Activated B cell treated with CpG ODN at 0.5 μM for 24 hours (primary cell): ENCODE measurements at regions of chrX and their contacts with region 1.

Region 1: DNA sequence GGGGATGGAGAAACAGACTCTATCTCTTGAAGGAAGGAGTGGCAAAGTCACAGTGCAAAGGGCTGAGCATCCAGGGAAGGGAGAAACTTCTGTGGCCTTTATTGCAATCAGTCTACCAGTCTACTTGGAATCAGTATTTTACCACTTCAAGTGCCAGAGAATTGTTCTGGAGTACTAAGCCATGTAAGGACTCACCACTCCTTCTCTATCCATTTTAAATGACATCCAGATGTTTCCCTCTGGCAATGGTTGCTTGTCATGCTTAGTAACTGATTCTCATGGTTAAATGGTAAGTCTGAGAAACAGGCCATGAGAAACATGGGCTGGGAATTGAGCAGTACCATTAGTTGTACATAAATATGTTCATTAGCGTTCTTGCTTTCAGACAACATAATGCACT is 21.1 kb upstream of the SMIM10 start:
- DNase-seq: no peak
- ATAC-seq: no peak
- H3K4me3 Mint-ChIP-seq: no peak overlapping the region
- H3K27ac Mint-ChIP-seq: no peak overlapping the region
- H3K4me1 Mint-ChIP-seq: no peaks in the 10 kb centered on the region
- H3K27me3 Mint-ChIP-seq: peaks cover 3% of the 10 kb centered on the region
- CTCF ChIP-seq: no peak

Region 2: DNA sequence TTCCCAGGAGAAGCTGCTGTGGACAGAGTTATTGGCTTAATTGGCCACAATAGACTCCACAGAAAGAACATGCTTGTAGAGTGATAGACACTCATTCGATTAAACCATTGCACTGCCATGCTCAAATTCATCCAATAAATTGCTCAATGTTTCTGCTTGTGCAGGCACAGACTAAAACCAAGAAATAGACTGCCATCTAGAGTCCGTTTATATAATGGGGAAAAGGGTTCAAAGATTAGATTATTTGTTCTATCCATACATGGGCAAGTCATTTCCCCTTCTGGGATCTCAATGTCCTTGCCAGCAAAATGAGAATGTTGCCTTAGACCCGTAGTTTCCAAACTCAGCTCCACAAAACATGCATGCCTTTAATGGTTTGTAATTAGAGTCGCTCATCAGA is 29.7 kb after region 1 on chrX:
- CTCF ChIA-PET with region 1: no interaction called
- POLR2A ChIA-PET with region 1: no interaction called
- intact Hi-C with region 1: loop called (anchors 1 kb)
- DNase-seq: no peak
- ATAC-seq: no peak
- H3K4me3 Mint-ChIP-seq: no peak overlapping the region
- H3K27ac Mint-ChIP-seq: no peak overlapping the region
- H3K4me1 Mint-ChIP-seq: peaks cover 12% of the 10 kb centered on the region
- H3K27me3 Mint-ChIP-seq: no peaks in the 10 kb centered on the region
- CTCF ChIP-seq: no peak

Region 3: DNA sequence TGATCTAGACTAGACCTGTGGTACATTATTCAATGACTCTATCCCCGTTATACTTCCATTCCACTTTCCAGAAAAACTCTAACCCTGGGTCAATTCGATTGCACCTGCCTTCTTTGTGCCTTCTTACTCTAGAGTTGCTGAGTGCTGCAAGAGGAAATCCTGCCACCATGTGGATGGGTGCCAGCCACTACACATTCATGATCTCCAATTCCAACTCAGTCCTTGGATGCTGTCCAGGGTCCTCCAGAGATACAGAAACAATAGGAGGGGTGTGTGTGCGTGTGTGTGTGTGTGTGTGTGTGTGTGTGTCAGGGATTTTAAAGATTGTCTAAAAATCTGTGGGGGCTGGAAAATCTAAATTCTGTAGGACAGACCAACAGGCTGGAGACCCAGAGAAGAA is 507.9 kb after region 1 on chrX:
- CTCF ChIA-PET with region 1: no interaction called
- POLR2A ChIA-PET with region 1: no interaction called
- intact Hi-C with region 1: loop called (anchors 1 kb)
- DNase-seq: no peak
- ATAC-seq: no peak
- H3K4me3 Mint-ChIP-seq: no peak overlapping the region
- H3K27ac Mint-ChIP-seq: no peak overlapping the region
- H3K4me1 Mint-ChIP-seq: no peaks in the 10 kb centered on the region
- H3K27me3 Mint-ChIP-seq: peaks cover 3% of the 10 kb centered on the region
- CTCF ChIP-seq: no peak

Region 4: GRCh38 chrX:135931644-135932487 is 962.1 kb after region 1 on chrX:
- CTCF ChIA-PET with region 1: no interaction called
- POLR2A ChIA-PET with region 1: no interaction called
- intact Hi-C with region 1: loop called (anchors 5 kb)
- DNase-seq: peak; percentile 15
- ATAC-seq: no peak
- H3K4me3 Mint-ChIP-seq: no peak overlapping the region
- H3K27ac Mint-ChIP-seq: no peak overlapping the region
- H3K4me1 Mint-ChIP-seq: no peaks in the 10 kb centered on the region
- H3K27me3 Mint-ChIP-seq: no peaks in the 10 kb centered on the region
- CTCF ChIP-seq: no peak